A673 (cell line): ENCODE measurements at regions of chr12 and their contacts with region 1.

Region 1: DNA sequence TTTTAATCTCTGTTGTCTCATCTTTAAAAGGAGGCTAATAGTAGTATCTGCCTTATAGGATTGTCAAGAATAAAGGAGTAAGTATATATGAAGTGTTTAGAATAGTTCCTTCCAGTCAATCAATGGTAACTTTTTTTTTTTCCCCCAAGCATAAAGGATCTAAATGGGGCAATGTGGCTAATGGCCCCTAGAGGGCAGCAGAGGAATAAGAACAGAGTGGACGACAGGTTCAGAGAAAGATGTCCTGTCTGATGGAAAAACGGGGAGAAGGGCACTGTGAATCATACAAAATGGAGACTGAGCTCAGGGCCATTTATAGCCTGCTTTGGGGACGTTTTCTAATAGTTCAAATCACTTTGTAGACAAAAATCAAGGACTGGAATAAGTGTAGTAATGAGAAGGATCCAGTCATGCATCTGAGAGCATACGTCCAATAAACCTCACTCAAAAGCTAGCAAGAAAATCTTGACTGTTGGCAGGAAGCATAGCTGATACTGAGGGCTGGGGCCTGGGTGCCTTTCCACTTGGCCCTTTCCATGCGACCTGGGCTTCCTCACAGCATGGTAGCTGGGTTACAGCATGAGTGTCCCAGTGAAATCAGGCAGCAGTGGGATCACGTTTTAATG is 51.3 kb downstream of the IFNG-AS1 start:
- DNase-seq: peak; percentile 78
- H3K4me3 ChIP-seq: no peak overlapping the region
- H3K27ac ChIP-seq: no peak overlapping the region
- H3K4me1 ChIP-seq: no peaks in the 10 kb centered on the region
- H3K27me3 ChIP-seq: no peaks in the 10 kb centered on the region
- CTCF ChIP-seq: peak; percentile 92

Region 2: GRCh38 chr12:68158432-68158831 is 117.9 kb after region 1 on chr12:
- CTCF ChIA-PET with region 1: interaction called, 5 read pairs
- POLR2A ChIA-PET with region 1: no interaction called
- intact Hi-C with region 1: loop called (anchors 5 kb)
- DNase-seq: peak; percentile 44
- H3K4me3 ChIP-seq: no peak overlapping the region
- H3K27ac ChIP-seq: no peak overlapping the region
- H3K4me1 ChIP-seq: no peaks in the 10 kb centered on the region
- H3K27me3 ChIP-seq: peaks cover 3% of the 10 kb centered on the region
- CTCF ChIP-seq: peak; percentile 63

Region 3: GRCh38 chr12:68317047-68317667 is 276.6 kb after region 1 on chr12:
- CTCF ChIA-PET with region 1: interaction called, 16 read pairs
- POLR2A ChIA-PET with region 1: no interaction called
- intact Hi-C with region 1: loop called (anchors 5 kb)
- DNase-seq: peak; percentile 61
- H3K4me3 ChIP-seq: no peak overlapping the region
- H3K27ac ChIP-seq: no peak overlapping the region
- H3K4me1 ChIP-seq: peaks cover 3% of the 10 kb centered on the region
- H3K27me3 ChIP-seq: no peaks in the 10 kb centered on the region
- CTCF ChIP-seq: peak; percentile 70